ENCODE measurements at regions of chr7 and their contacts with region 1.

Region 1: GRCh38 chr7:32879460-32879859 is 12.1 kb downstream of the KBTBD2 start:
- DNase-seq: no peak
- H3K4me3 ChIP-seq: no peak overlapping the region
- H3K27ac ChIP-seq: no peak overlapping the region
- H3K4me1 ChIP-seq: no peaks in the 10 kb centered on the region
- H3K27me3 ChIP-seq: no peaks in the 10 kb centered on the region
- CTCF ChIP-seq: no peak
- EP300 ChIP-seq: no peak
- POLR2A ChIP-seq: no peak
- RAD21 ChIP-seq: no peak

Region 2: GRCh38 chr7:32865448-32866030 is 13.9 kb before region 1 on chr7:
- CTCF ChIA-PET with region 1: interaction called, 5 read pairs
- POLR2A ChIA-PET with region 1: interaction called, 10 read pairs
- DNase-seq: no peak
- H3K4me3 ChIP-seq: no peak overlapping the region
- H3K27ac ChIP-seq: no peak overlapping the region
- H3K4me1 ChIP-seq: peaks cover 0 to 6% (median 5%) of the 10 kb centered on the region in 4 experiments; a peak in 5 of 7 replicates
- H3K27me3 ChIP-seq: no peaks in the 10 kb centered on the region
- CTCF ChIP-seq: no peak
- EP300 ChIP-seq: no peak
- POLR2A ChIP-seq: no peak
- RAD21 ChIP-seq: no peak